Right lobe of liver (tissue), 6 donors: ENCODE measurements at regions of chr1 and their contacts with region 1.

Region 1: DNA sequence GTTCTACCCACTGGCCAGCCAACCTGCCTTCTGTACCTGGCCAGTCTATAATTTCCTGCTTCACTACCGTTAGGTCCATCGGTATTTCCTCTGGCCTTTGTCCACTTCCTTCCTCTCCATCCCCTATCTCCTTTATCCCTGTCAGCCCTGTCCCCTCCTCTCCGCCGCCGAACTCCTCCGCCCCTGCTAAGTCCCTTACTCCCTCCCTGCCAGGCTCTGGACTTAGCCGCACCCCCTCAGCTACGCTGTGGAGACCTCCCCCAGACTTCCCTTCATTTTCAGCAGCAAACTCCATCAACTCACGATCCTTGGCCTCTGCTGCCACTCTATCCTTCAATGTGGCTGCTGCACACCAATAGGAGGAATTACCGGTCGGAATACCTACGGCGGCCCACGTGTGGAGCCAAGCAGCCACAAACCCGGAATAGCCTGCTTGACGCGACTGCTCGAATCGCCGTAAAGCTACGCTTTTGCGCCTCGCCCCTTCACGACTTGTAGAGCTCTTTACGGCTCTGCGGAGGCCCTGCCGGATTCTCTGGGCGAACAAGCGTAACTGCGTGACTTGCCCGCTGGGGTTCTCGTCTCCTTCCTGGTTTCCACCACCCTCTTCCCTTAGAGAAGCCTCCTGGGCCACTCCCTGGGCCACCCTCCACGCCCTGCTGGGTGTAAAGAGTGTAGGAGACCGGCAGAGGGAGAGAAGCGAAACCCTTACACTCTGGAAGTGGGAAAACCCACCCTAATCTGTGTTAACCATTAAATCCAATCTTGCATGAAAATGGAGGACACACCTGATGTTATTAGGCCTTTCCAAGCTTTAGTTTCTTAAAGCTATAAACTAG is at the start of gene ZNHIT6:
- DNase-seq: peak; percentile 88 to 93 (median 92)
- ATAC-seq: peak; percentile 98 to 99 (median 99)
- H3K4me3 ChIP-seq: peak within 1 kb of the TSS; percentile 62 to 78 (median 65)
- H3K27ac ChIP-seq: peak within 1 kb of the TSS; percentile 75 to 76 (median 75)
- H3K4me1 ChIP-seq: peaks cover 0 to 10% (median 4%) of the 10 kb centered on the region in 4 donors
- H3K27me3 ChIP-seq: no peaks in the 10 kb centered on the region
- CTCF ChIP-seq: peak; percentile 9 to 30 (median 25)
- POLR2A ChIP-seq: peak; percentile 70
- total RNA-seq, gene ZNHIT6: 3.1 to 5.1 (median 4.2) TPM

Region 2: DNA sequence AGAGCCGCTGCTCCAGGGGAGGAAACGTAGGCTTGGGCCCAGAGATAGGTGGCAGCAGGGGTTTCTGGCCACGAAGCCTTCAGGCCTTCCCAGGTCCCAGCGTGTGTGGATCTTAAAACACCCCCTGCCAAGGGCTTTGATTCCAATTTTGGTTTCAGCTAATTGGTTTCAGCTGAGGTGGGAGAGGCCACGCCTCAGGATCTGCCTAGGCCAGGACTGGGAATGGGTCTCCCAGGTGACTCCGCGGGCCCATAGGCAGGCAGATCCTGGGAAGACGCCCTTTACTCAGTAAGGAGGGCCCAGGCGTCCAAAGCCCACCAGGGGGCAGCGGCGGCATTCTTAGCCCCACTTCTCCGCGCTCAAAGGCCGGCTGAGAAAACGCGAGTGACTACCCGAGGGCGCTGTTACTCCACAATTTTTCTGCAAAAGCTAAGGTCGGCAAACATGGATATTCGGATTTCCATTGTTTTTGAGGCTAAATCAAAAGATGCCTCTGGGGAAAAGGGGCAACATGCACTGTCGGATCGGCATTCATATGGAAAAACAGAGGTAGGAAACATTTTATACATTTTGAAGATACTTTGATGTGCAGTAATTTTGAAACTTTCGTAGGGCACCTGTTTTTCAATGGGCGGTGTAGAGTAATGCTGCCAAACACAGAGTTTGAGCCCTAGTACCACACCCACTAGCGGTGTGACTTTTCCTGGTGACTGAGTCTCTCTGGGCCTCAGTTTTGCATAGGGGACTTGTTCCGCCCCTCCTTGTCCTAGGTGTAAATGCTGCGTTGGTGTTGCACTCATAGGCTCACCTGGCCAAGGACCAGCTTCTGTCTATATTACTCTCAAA is 400.0 kb before region 1 on chr1:
- intact Hi-C with region 1: loop called in 1 of 2 experiments (anchors 10 kb)
- DNase-seq: peak; percentile 85 to 87 (median 87)
- ATAC-seq: peak; percentile 100
- H3K4me3 ChIP-seq: no peak overlapping the region
- H3K27ac ChIP-seq: no peak overlapping the region
- H3K4me1 ChIP-seq: no peaks in the 10 kb centered on the region
- H3K27me3 ChIP-seq: no peaks in the 10 kb centered on the region
- CTCF ChIP-seq: peak; percentile 97 to 98 (median 98)
- POLR2A ChIP-seq: no peak

Region 3: DNA sequence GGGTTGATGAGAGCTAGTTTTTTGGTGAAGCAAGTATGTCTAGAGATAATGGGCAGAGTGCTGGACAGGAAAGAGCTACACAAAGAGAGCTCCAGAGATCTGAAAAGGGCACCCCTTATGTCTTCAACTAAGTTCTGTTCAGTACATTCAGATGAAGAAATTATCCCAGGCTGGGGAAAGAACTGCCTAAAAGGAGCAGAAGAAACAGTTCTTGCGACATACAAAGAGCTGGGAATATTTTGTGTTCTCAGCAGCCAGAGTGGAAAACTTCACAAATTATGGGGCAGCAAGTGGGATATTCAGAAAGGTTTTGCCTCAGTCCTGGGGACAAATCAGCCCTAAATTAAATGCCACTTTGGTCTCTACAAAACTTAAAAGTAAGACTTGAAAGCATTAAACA is 145.1 kb before region 1 on chr1:
- intact Hi-C with region 1: no loop called
- DNase-seq: no peak
- ATAC-seq: no peak
- H3K4me3 ChIP-seq: no peak overlapping the region
- H3K27ac ChIP-seq: no peak overlapping the region
- H3K4me1 ChIP-seq: no peaks in the 10 kb centered on the region
- H3K27me3 ChIP-seq: no peaks in the 10 kb centered on the region
- CTCF ChIP-seq: no peak
- POLR2A ChIP-seq: no peak

Region 4: GRCh38 chr1:85612704-85613361 is 95.4 kb before region 1 on chr1:
- intact Hi-C with region 1: loop called in 1 of 2 experiments (anchors 10 kb)
- DNase-seq: peak in 1 of 3 donors; percentile 54
- ATAC-seq: peak; percentile 81 to 90 (median 84)
- H3K4me3 ChIP-seq: no peak overlapping the region
- H3K27ac ChIP-seq: peak overlapping the region; percentile 8 to 27 (median 24)
- H3K4me1 ChIP-seq: peaks cover 0 to 7% (median 3%) of the 10 kb centered on the region in 4 donors
- H3K27me3 ChIP-seq: no peaks in the 10 kb centered on the region
- CTCF ChIP-seq: peak; percentile 41 to 76 (median 60)
- POLR2A ChIP-seq: no peak